Posterior vena cava (tissue), 2 donors: ENCODE measurements at regions of chr18 and their contacts with region 1.

Region 1: DNA sequence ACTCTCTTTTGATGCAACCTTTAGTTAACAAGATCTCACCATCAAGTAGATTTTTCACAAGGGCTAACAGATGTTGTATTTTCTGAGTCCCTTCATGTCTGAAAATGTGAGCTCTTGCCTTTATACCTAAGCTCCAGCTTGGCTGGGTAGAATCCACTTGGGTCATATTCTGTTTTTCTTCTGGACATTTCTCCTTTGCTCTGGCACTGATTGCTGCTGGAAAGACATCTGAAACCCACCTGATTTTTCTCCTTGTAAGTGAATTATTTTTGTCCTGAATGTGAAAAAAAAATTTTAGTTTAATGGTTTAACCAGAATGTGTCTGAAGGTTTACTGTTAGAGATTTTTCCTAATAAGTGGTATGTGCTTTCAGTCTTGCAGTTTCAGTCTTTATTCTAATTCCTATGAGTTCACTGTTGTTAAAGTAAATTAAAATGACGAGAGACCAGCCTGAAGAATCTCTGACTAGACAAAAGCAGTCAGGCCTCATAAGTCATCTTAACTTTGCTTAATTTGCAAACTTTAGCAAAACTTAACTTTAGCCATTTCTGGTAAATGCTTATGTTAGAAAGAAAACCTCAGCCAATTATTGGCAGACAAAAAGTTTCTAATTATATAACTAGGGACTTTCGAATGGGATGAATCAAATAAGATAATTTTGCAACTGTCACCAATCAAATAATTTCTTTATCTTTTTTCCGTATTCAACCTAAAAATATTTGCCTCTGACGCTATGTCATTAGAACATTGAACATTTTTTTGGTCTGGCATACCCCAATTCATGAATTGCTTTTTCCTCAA is 70.8 kb downstream of the ACAA2 start:
- DNase-seq: no peak

Region 2: GRCh38 chr18:49510393-49511115 is 232.0 kb before region 1 on chr18:
- intact Hi-C with region 1: no loop called
- DNase-seq: peak; percentile 76

Region 3: DNA sequence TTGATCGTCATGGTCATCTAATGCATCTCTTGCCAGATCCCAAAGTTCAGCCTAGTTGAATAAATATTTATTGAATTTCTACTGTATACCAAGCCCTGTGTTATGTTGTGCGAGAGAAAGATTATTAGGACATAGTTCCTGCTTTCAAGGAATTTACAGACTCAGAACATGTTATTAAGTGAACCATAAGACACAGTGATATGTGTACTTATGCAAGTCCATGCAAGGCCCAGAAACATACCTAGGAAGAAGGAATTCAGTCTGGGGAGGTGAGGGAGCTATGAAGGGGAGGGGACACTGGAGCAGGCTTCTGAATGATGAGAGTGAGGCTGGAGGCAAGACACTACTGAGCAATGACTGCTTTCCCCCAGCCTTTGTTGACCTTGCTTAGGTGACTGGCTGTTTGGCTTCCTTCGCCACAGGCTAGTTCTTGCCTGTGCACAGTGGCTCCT is 10.6 kb before region 1 on chr18:
- intact Hi-C with region 1: loop called in 1 of 2 experiments (anchors 1 kb)
- DNase-seq: no peak

Region 4: GRCh38 chr18:49813319-49814146 is 71.0 kb after region 1 on chr18 and contains the start of gene ACAA2:
- intact Hi-C with region 1: no loop called
- DNase-seq: peak; percentile 97
- total RNA-seq, gene ACAA2: 32.1 to 42.7 TPM